ENCODE measurements at regions of chr19 and their contacts with region 1.

Region 1: DNA sequence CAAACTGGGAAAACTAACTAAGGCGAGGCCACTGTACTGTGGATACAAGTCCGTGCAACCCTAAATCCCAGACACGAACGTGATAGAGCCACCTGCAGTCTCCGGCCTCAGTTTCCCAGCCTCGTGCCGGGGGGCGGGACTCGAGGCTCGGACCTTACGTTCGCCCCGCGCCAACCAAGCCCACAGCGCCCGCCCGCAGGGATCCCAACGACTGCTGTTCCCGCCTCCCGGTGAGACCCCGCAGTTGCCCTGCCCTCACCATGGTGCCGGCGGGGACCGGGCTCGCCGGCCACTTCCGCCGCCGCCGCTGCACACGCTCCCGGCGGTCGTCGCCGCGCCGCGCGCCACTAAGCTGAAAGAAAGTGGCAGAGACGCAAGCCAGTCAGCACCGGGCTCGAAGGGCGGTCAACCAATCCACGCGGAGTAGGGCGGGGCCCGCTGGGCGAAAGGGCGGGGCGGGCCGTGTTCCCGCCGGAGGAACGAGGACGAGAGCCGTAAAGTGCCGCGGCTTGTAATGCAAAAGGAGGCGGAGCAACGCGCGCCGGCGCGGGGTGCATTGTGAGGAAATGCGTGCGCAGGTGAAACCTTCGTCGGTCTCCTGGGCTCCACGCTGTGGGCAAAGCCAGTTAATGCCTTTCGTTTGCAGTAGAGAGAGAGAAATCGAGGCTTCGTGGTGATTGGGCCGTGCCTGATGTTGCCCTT is at the start of gene LSM4:
- DNase-seq: peak; percentile 96
- ATAC-seq: peak; percentile 98
- H3K4me3 ChIP-seq: peak within 1 kb of the TSS; percentile 86
- H3K27ac ChIP-seq: peak within 1 kb of the TSS; percentile 90
- H3K4me1 ChIP-seq: peaks cover 32% of the 10 kb centered on the region
- H3K27me3 ChIP-seq: no peaks in the 10 kb centered on the region
- CTCF ChIP-seq: peak; percentile 55 to 66 (median 56)
- EP300 ChIP-seq: 0 out of 4 replicates have a peak, but pooled peaks of 1 of the 2 experiments have one; percentile 5
- POLR2A ChIP-seq: peak; percentile 94
- RAD21 ChIP-seq: peak; percentile 58
- polyA plus RNA-seq, gene LSM4: 12.6 to 38.2 TPM

Region 2: DNA sequence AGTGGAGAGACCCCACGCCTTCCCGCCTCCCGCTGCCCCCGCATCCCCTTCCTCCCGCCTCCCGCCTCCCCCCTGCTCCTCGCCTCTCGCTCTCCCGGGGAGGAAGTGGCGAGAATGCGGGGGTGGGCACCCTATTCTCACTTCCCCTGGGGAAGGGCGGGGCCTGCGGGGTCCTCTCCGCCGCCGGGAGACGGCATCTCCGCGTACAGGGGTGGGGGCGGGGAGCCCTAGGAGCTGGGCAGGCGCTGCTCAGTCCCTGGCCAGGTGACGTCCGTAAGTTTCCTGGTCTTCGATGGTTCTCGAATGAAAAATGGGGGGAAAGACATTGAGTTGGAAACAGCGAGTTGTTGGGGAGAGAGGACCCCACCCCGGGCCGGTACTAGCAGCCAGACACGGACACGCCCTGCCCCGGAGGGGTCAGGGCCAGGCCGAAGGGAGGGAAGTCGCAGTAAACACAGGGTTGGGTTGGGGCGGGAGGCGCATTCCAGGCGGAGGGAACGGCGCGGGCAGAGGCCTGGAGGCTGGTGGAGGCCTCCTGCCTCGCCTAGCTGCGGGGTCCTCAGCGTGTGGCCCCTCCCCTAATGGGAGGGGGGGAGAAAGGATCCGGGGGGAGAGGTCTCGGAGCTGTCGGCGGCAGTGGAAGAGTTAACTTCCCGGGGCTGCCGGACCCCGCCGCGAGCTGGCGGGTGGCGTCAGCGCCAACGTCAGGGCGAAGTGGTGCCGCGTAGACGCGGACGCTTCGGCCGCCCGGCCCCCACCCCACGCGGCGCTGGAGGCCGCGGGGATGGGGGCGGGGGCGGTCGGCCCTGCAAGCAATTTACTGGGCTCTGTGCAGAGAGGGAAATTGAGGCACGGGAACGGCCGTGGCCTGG is 31.1 kb before region 1 on chr19:
- CTCF ChIA-PET with region 1: interaction called, 25 read pairs
- POLR2A ChIA-PET with region 1: interaction called, 26 read pairs
- RAD21 ChIA-PET with region 1: interaction called, 20 read pairs
- SMC1A ChIA-PET with region 1: interaction called, 21 read pairs
- in situ Hi-C with region 1: no loop called
- intact Hi-C with region 1: loop called (anchors 1 kb)
- DNase-seq: no peak
- ATAC-seq: peak; percentile 69
- H3K4me3 ChIP-seq: peak overlapping the region; percentile 96
- H3K27ac ChIP-seq: peak overlapping the region; percentile 96
- H3K4me1 ChIP-seq: peaks cover 32% of the 10 kb centered on the region
- H3K27me3 ChIP-seq: no peaks in the 10 kb centered on the region; a peak in 1 of 4 replicates
- CTCF ChIP-seq: no peak
- EP300 ChIP-seq: peak; percentile 75 to 83; a peak in 3 of 4 replicates
- POLR2A ChIP-seq: peak; percentile 72
- RAD21 ChIP-seq: no peak; the same call in 1 of the 2 replicates

Region 3: GRCh38 chr19:18304458-18305310 is 18.2 kb before region 1 on chr19:
- CTCF ChIA-PET with region 1: interaction called, 33 read pairs
- POLR2A ChIA-PET with region 1: interaction called, 48 read pairs
- RAD21 ChIA-PET with region 1: interaction called, 24 read pairs
- SMC1A ChIA-PET with region 1: interaction called, 17 read pairs
- in situ Hi-C with region 1: no loop called
- intact Hi-C with region 1: loop called (anchors 1 kb)
- DNase-seq: no peak
- ATAC-seq: peak; percentile 79
- H3K4me3 ChIP-seq: peak overlapping the region; percentile 89
- H3K27ac ChIP-seq: peak overlapping the region; percentile 97
- H3K4me1 ChIP-seq: peaks cover 22% of the 10 kb centered on the region
- H3K27me3 ChIP-seq: no peaks in the 10 kb centered on the region
- CTCF ChIP-seq: no peak
- EP300 ChIP-seq: no peak; a peak in 2 of 4 replicates
- POLR2A ChIP-seq: peak; percentile 82
- RAD21 ChIP-seq: no peak

Region 4: DNA sequence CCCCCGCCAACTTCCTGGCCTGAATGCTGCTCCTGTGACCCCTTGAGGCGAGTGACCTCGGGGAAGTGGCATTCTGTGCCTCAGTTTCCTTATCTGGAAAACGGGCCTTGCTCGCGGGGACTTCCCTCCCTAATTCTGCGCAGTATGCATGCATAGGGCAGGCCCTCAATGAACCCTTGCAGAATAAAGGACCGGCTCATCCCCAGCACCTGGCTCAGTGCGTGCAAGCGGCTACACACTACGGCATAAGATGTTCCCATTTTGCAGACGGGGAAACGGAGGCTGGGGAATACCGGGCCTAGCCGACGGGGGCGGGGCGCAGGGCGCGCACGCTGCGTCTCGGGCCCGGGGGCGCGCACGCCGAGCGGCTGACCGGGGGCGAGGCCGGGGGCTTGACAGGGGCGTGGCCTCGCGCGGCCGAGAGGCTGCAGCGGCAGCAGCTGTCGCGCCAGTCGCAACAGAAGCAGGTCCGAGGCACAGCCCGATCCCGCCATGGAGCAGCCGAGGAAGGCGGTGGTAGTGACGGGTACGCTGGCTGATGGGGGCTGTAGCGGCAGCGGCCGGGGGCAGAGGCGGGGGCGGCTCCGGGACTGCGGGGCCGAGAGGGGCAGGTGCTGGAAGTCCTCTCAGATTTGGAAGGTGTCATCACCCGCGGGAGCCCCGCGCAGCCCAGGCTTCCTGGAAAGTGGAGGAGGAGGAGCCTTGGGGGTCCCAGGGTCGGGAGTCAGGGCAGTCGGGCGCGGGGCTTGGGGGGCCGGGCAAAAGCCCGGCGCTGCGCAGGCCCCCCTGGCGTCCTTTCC is 17.5 kb after region 1 on chr19 and contains the start of gene PGPEP1:
- CTCF ChIA-PET with region 1: interaction called, 56 read pairs
- POLR2A ChIA-PET with region 1: interaction called, 14 read pairs
- RAD21 ChIA-PET with region 1: interaction called, 3 read pairs
- SMC1A ChIA-PET with region 1: interaction called, 11 read pairs
- in situ Hi-C with region 1: no loop called
- intact Hi-C with region 1: no loop called
- DNase-seq: no peak
- ATAC-seq: peak; percentile 86
- H3K4me3 ChIP-seq: peak within 1 kb of the TSS; percentile 79
- H3K27ac ChIP-seq: peak within 1 kb of the TSS; percentile 58
- H3K4me1 ChIP-seq: peaks cover 14% of the 10 kb centered on the region
- H3K27me3 ChIP-seq: no peaks in the 10 kb centered on the region
- CTCF ChIP-seq: no peak
- EP300 ChIP-seq: no peak
- POLR2A ChIP-seq: peak; percentile 70; the same call in 1 of the 2 replicates
- RAD21 ChIP-seq: no peak
- polyA plus RNA-seq, gene PGPEP1: 13.8 to 13.9 TPM

Region 5: GRCh38 chr19:18373892-18374629 is 51.2 kb after region 1 on chr19:
- CTCF ChIA-PET with region 1: no interaction called
- POLR2A ChIA-PET with region 1: no interaction called
- RAD21 ChIA-PET with region 1: no interaction called
- SMC1A ChIA-PET with region 1: no interaction called
- in situ Hi-C with region 1: no loop called
- intact Hi-C with region 1: no loop called
- DNase-seq: peak; percentile 91
- ATAC-seq: peak; percentile 98
- H3K4me3 ChIP-seq: 0 out of 2 replicates have a peak overlapping the region, but pooled peaks have one; percentile 29
- H3K27ac ChIP-seq: peak overlapping the region; percentile 95
- H3K4me1 ChIP-seq: peaks cover 41% of the 10 kb centered on the region
- H3K27me3 ChIP-seq: no peaks in the 10 kb centered on the region
- CTCF ChIP-seq: no peak
- EP300 ChIP-seq: peak; percentile 72 to 88
- POLR2A ChIP-seq: peak; percentile 77; the same call in 1 of the 2 replicates
- RAD21 ChIP-seq: no peak